ENCODE measurements at regions of chr17 and their contacts with region 1.

Region 1: DNA sequence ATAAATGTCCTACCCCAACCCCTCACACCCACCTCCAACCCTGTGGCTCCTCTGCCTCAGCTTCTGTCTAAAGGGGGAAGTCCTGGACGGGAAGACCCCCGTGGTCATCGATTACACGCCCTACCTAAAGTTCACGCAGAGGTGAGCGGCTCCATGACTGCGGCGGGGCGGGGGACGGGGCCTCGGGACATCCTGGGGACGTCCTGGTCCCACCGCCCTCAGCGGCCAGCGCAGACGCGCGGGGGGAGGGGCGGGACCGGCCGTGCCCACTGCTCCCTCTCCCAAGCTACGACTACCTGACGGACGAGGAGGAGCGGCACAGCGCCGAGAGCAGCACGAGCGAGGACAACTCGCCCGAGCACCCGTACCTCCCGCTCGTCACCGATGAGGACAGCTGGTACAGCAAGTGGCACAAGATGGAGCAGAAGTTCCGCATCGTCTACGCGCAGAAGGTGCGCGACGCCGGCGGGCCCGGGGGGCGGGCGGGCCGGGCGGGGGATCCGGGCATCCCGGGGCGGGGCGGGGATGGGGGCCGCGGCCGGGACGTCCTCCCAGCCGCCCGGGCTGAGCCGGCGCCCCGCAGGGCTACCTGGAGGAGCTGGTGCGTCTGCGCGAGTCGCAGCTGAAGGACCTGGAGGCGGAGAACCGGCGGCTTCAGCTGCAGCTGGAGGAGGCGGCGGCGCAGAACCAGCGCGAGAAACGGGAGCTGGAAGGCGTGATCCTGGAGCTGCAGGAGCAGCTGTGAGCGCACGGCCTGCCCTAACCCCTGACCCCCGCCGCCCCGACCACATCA is 6.7 kb downstream of the RUNDC3A start:
- DNase-seq: peak; percentile 76
- ATAC-seq: peak; percentile 13
- H3K4me3 Mint-ChIP-seq: peak overlapping the region; percentile 79
- H3K27ac Mint-ChIP-seq: no peak overlapping the region
- H3K4me1 Mint-ChIP-seq: peaks cover 39% of the 10 kb centered on the region
- H3K27me3 Mint-ChIP-seq: peaks cover 37% of the 10 kb centered on the region
- CTCF ChIP-seq: no peak

Region 2: GRCh38 chr17:44132275-44132821 is 182.7 kb before region 1 on chr17:
- CTCF ChIA-PET with region 1: no interaction called
- POLR2A ChIA-PET with region 1: no interaction called
- DNase-seq: no peak
- ATAC-seq: no peak
- H3K4me3 Mint-ChIP-seq: no peak overlapping the region
- H3K27ac Mint-ChIP-seq: no peak overlapping the region
- H3K4me1 Mint-ChIP-seq: peaks cover under 1% of the 10 kb centered on the region
- H3K27me3 Mint-ChIP-seq: no peaks in the 10 kb centered on the region; the same call in 1 of the 2 replicates
- CTCF ChIP-seq: no peak

Region 3: GRCh38 chr17:44235583-44235936 is 79.5 kb before region 1 on chr17:
- CTCF ChIA-PET with region 1: no interaction called
- POLR2A ChIA-PET with region 1: no interaction called
- DNase-seq: no peak
- ATAC-seq: no peak
- H3K4me3 Mint-ChIP-seq: no peak overlapping the region
- H3K27ac Mint-ChIP-seq: no peak overlapping the region
- H3K4me1 Mint-ChIP-seq: no peaks in the 10 kb centered on the region
- H3K27me3 Mint-ChIP-seq: peaks cover 7% of the 10 kb centered on the region
- CTCF ChIP-seq: no peak

Region 4: DNA sequence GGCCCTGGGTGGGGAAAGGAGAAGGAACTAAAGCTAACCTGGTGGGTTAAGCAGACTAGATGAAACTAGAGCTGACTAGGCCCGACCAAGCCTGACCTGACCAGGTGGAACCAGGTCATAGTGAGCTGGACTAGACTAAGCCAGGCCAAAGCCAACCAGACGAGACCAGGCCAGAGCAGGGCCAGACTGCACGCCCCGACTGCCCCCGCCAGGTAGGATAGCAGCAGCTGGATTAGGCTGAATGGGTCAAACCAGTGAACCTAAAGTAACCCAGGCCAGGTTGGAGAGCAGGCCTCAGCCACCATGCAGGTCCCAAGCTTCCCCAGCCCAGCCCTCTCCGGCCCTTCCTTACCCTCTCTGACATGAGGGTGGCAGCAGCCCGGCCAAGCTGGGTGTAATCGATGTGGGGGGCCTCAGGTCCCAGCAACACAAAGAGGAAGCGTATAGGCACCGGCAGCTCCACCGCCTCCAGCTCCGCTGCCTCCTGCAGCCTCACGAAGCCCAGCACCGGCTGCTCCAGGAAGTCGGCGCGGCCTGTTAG is 56.2 kb before region 1 on chr17:
- CTCF ChIA-PET with region 1: no interaction called
- POLR2A ChIA-PET with region 1: interaction called, 11 read pairs
- DNase-seq: no peak
- ATAC-seq: no peak
- H3K4me3 Mint-ChIP-seq: no peak overlapping the region
- H3K27ac Mint-ChIP-seq: no peak overlapping the region
- H3K4me1 Mint-ChIP-seq: no peaks in the 10 kb centered on the region
- H3K27me3 Mint-ChIP-seq: no peaks in the 10 kb centered on the region; the same call in 1 of the 2 replicates
- CTCF ChIP-seq: no peak

Region 5: DNA sequence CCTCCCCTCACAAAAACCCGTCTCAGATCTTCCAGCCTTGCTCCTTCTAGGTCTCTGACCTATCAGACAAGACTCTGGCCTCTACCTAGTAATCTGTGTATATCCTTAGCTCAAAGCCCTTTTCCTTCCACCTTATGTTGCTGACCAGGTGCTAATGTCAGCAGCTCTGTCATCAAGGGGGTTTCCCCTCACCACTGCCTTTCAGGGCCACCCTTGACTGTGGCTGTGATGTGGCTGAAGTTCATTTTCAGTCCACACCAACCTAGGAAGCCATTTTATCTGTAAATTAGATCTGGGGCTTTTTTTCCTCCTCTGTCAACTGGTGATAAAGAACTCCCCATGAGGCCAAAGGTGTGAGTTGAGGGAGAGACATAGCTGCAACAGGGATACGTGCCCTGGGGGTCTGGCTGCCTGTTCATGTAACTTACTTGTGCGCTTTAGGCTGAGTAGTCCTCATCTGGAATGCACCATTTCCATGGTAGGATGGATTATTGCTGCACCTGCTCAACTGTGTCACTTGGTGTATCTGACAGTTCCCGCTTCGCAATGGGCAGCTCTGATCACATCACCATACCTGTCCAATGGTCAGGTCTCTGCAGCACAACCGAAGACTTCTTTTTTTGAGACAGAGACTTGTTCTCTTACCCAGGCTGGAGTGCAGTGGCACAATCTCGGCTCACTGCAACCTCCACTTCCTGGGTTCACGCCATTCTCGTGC is 21.4 kb before region 1 on chr17:
- CTCF ChIA-PET with region 1: no interaction called
- POLR2A ChIA-PET with region 1: no interaction called
- DNase-seq: no peak
- ATAC-seq: no peak
- H3K4me3 Mint-ChIP-seq: no peak overlapping the region
- H3K27ac Mint-ChIP-seq: no peak overlapping the region; the same call in 1 of the 2 replicates
- H3K4me1 Mint-ChIP-seq: peaks cover under 1% of the 10 kb centered on the region; the same call in 1 of the 2 replicates
- H3K27me3 Mint-ChIP-seq: no peaks in the 10 kb centered on the region; the same call in 1 of the 2 replicates
- CTCF ChIP-seq: no peak

Region 6: DNA sequence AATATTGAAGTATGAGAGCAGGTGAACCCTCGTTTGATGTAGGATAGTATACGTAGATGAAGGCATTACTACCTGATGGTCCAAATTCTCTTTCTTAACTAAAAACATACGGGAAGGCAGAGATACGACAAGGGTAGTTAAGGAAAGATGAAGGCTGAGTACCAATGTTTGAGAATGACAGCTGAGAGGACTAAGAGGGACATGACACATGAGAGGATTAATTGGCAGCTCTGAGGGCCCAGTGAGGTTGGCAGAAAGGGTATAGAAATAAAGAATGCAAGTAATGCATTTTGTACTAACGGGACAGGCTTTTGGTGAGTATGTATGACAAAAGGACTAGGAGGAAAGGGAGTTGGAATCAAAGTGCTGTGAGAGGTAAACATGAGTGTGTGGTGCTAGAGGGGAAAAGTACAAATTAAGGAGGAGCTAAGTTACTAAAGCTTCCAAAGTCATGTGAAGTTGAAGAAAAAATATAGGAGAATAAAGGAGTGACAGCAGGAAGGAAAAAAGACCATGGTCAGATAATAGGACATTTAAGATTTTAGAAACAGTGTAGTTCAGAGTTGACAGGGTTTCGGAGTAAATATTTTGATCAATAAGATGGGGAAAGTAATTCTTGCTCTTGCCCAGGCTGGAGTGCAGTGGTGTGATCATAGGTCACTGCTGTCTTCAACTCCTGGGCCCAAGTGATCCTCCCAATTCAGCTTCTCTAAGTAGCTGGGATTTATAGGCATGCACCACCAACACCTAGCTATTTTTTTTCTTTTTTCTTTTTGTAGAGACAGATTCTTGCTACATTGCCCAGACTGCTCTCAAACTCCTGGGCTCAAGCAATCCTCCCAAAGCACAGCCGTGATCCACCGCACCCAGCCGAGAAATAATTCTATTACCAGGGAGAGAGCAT is 117.4 kb after region 1 on chr17:
- CTCF ChIA-PET with region 1: no interaction called
- POLR2A ChIA-PET with region 1: no interaction called
- DNase-seq: no peak
- ATAC-seq: no peak
- H3K4me3 Mint-ChIP-seq: no peak overlapping the region
- H3K27ac Mint-ChIP-seq: no peak overlapping the region; the same call in 1 of the 2 replicates
- H3K4me1 Mint-ChIP-seq: no peaks in the 10 kb centered on the region
- H3K27me3 Mint-ChIP-seq: no peaks in the 10 kb centered on the region
- CTCF ChIP-seq: no peak

Measured in WTC11 (cell line).